Right ventricle myocardium inferior (tissue), 1 donor: ENCODE measurements at regions of chr11 and their contacts with region 1.

Region 1: GRCh38 chr11:57567515-57568329 is at the start of gene UBE2L6:
- DNase-seq: peak; percentile 92
- ATAC-seq: peak; percentile 85
- total RNA-seq, gene UBE2L6: 19.2 TPM

Region 2: DNA sequence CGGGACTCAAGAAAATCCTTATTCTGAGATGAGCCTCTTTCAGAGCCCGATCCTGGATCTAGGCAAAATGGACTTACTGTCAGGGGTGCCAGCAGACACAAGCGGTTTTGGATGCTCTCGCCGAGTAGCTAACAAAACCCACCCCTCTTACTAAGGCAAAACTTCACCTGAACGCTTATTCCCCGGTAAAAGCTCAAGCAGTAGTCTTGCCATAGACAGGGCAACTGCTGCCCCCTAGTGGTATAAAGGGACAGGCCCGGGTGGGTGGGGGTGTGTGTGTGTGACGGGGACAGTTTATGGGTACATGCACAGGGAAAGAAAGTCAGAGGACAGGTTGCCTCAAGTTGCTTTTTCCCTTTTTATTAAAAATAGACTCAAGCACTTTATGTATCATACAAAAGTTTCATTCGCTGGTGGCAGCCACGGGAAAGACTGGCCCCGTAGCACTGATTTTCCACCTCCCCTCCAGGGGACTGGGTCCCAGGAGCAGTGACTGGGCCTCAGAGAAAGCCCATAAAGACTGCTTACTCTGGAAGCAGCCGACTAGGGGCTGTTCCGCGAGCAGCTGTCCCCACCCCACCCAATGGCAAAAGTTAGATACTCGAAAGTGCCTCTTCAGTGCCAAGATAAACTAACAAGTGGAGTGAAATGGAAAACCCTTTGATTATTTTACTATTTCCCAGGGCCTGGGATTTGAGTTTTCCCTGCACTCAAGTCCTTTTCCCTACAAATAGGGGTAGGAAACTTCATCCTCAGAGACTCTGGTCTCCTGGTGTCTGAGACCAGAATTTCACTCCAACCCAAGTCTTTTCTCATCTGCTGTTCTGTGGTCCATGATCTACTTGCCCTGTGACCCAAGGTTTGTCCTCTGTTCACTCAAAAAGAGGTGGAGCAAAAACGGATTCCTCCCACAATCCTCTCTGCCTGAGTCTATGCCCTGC is 77.3 kb after region 1 on chr11:
- intact Hi-C with region 1: loop called (anchors 2 kb)
- DNase-seq: peak; percentile 88
- ATAC-seq: peak; percentile 76

Region 3: DNA sequence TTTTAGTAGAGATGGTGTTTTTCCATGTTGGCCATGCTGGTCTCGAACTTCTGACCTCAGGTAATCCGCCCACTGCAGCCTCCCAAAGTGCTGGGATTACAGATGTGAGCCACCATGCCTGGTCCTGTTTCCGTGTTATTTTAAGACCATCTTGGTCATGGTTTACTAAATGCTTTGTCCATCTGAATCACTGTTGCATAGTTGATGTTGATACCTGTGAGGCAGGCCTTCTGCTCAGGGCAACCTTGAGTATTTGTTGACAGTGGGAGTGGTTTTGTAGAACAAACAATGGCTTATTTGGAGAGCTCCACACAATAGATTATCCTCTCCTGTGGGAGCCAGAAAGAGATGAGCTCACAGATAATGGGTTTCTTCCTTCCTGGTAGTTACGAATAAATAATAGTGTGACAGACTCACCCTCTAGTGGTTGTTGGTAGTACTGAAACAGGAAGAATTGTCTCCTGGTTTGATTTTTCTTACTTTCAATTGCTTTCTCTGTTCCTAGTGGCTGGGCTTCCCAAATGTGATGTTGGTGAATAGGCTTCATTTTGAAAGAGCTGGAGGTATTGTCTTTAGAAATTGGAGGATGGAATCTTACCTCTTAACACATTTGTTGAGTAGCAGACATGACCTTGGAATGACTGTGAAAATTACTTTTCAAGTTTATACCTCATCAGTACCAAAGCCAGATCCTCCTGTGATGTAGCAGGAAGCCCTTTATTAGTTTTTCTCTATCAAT is 232.9 kb after region 1 on chr11:
- intact Hi-C with region 1: no loop called
- DNase-seq: no peak
- ATAC-seq: peak; percentile 70